Right ventricle myocardium inferior (tissue), 1 donor: ENCODE measurements at regions of chr16 and their contacts with region 1.

Region 1: DNA sequence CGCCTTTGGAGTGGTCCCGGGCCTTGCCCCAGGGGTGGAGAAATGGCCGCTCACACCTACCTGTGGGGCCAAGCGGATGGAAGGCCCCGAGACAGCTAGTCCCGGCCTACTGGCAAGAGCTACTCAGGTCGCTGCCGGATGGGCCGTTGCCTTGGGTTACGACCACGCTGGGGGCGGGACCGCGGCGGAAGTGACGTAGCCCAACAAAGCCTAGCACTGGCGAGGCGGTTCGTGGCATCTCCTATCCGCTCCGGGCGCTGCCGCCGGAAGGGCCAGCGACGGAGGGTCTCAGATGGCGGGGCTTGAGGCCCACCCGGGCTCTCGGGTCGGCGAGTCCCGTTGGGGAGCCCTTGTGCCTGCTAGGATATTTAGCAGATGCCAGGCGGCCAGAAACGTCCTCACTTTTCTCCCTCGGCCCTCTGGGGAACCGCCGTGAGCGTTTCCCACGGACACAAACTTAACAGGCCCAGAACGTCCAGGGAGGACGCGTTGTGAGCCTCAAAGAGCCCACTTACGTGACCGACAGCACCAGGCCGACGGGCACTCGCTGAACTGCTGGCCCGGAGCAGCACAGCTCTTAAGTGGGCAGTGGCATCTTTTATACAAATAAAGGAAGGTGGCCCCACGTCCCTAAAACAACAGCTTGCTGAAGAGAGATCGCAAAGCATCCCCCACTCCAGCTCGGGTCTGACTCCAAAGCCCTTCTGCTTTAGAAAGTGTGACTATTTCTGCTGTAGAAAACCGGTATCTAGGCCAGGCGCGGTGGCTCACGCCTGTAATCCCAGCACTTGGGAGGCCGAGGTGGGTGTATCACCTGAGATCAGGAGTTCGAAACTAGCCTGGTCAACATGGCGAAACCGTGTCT is at the start of gene C16orf46:
- DNase-seq: peak; percentile 98
- ATAC-seq: peak; percentile 99
- total RNA-seq, gene C16orf46: 0.62 TPM

Region 2: GRCh38 chr16:80631581-80631980 is 445.7 kb before region 1 on chr16:
- intact Hi-C with region 1: no loop called
- DNase-seq: no peak
- ATAC-seq: no peak

Region 3: DNA sequence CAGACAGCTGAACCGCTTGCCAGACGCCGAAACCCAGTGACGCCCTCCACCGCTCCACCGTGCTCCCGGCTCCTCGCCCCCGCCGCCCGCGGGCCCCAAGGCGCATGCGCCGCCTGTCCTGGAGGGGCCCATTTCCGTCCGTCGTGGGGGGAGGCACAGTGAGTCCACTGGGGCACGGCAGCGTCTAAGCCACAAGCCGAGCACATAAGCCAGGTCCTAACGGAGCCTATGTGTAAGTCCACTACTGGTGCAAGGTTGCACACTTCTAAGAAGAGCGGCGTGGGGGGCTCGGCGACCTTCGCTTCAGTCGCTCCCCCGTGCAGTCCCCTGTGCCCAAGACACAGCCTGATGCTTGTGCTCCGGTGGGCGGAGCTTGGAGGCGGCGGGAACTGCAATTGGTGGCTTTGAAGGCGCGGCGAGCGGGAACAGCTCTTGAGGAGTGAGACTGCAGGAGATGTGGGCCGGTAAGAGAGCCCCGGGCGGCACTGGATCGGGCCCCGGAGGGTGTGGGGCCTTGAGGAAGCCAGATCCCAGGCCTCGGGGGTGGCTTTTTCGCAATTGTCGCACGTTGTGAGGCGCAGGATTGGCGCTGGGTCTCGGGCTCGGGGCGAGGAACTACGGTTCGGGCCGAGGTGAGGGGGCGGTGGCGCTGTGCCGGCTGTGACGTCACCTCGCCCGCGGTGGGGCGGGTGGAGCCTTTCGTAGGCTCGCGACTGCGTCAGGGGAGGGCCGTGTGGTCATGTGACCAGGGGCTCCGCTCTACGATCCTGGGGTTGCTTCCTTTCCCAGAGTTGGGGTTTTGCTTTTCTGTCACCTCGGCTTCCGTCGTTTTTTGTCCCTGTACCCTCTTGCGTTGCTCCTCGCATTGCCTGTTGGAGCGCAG is 70.3 kb before region 1 on chr16 and contains the starts of genes CENPN and CMC2:
- intact Hi-C with region 1: loop called (anchors 2 kb)
- DNase-seq: peak; percentile 99
- ATAC-seq: peak; percentile 97
- total RNA-seq, gene CENPN: 8.9 TPM
- total RNA-seq, gene CMC2: 130 TPM

Region 4: DNA sequence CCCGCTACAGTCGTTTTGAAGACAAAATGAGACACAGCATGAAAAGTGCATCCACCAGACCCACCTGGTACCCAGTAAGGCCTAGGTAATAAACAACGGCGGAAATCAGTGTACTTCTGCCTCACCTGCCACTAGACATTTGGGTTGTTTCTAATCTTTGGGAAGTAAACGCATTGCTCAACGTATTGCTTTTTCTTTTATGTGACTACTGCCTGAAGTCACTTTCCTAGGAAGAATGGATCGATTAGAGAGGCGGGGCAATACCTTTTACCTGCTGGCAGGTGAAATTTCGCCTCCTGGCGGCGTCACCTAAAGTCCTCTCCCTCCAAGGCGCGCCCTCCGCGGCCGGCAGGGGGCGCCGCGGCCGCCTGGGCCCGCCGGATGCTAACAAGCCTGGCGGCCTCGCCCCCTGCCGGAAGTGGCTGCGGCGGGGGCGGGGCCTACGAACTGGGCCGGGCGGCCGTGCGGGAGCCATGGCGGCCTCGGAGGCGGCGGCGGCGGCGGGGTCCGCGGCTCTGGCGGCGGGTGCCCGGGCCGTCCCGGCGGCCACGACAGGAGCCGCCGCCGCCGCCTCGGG is 41.8 kb before region 1 on chr16 and contains the start of gene ATMIN:
- intact Hi-C with region 1: loop called (anchors 2 kb)
- DNase-seq: peak; percentile 96
- ATAC-seq: peak; percentile 98
- total RNA-seq, gene ATMIN: 21.2 TPM

Region 5: DNA sequence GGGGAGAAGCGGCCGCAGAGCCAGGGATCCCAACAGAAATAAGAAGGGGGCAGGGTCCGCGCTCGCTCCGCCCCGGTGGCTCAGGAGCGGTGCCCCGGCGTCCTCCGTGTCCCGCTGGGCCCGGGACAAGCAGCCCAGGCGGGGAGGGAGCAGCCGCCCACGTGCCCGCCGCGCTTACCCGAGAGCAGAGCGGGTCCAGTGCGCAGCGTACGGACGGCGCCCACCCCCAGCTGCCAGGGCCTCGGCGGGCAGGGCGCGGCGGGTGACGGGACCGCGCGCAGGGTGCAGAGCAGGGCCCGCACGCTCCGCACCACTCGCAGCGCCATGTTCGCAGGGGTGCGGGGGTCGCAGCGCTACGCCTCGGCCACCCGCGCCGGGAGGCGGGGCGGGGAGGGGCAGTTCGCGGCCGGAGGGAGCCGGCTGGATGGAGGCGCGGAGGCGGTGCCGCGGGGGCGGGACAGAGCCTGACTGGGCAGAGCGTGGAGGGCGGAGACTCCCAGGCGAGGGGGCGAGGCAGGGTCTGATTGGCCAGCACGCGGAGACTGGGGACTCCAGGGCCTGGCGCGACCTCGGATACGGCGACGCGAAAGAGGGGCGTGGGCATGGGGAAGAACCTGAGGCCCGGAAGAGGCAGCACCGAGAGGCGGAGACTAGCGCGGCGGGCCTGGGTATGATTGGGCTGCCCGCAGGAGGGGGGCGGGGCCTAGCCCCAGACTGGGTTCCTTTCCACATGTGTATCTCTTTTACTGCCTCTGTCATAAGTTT is 18.8 kb after region 1 on chr16 and contains the start of gene GCSH:
- intact Hi-C with region 1: loop called (anchors 1 kb)
- DNase-seq: peak; percentile 99
- ATAC-seq: peak; percentile 100
- total RNA-seq, gene GCSH: 52.3 TPM